Natural killer cell (primary cell): ENCODE measurements at regions of chr5 and their contacts with region 1.

Region 1: DNA sequence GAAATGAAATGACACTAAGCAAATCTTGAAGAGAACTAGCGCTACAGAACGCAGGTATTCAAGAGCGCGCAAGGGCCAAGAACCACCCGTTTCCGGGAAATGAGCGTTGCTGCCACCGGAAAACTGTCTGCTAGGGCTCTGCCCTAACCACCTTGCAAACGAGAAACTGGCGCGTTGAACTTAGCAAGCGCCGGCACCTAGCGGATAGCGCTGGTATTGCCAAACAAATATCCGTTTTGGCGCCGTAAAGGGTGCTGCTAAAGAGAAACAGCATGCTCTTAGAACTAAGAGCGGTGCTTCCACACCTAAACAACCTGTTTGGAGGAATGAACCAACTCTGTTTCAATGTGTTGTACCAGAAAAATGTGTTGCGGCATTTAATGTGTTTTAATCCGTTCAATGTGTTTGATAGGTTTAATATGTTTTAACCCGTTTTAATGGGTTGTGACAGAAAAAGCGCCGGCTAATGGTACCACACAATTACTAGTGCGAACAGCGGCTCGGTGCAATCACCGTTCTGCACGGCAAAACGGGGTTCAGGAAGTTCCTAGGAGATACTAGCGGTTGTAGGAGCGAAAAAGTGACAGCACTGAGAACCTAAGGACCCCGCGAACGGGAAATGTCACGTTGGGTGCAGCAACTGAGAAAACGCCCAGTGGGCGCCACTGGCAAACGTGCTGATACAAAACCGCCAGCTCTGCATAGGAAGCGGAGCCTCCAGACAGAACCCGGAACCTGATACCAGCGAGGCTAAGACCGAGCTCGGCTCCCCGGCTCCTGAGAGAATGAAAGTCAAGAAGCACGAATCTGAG is at the start of gene ANXA2R:
- DNase-seq: peak; percentile 83 to 98
- ATAC-seq: peak; percentile 54 to 73 (median 56)
- H3K4me3 ChIP-seq: peak within 1 kb of the TSS; percentile 74
- H3K4me3 Mint-ChIP-seq: peak within 1 kb of the TSS; percentile 93
- H3K27ac ChIP-seq: peak within 1 kb of the TSS; percentile 98
- H3K27ac Mint-ChIP-seq: peak within 1 kb of the TSS; percentile 92 to 96
- H3K4me1 ChIP-seq: peaks cover 61% of the 10 kb centered on the region
- H3K4me1 Mint-ChIP-seq: peaks cover 74 to 83% of the 10 kb centered on the region in 2 donors
- H3K27me3 ChIP-seq: no peaks in the 10 kb centered on the region
- H3K27me3 Mint-ChIP-seq: no peaks in the 10 kb centered on the region
- CTCF ChIP-seq: peak; percentile 72
- total RNA-seq, gene ANXA2R: 34.3 to 55.2 (median 38.0) TPM

Region 2: GRCh38 chr5:42908509-42909488 is 131.7 kb before region 1 on chr5:
- intact Hi-C with region 1: loop called (anchors 1 kb)
- DNase-seq: peak; percentile 83 to 98
- ATAC-seq: peak; percentile 84 to 95 (median 93)
- H3K4me3 ChIP-seq: peak overlapping the region; percentile 67
- H3K4me3 Mint-ChIP-seq: peak overlapping the region; percentile 96
- H3K27ac ChIP-seq: peak overlapping the region; percentile 41
- H3K27ac Mint-ChIP-seq: peak overlapping the region; percentile 86 to 90
- H3K4me1 ChIP-seq: peaks cover 8% of the 10 kb centered on the region
- H3K4me1 Mint-ChIP-seq: peaks cover 8 to 14% of the 10 kb centered on the region in 2 donors
- H3K27me3 ChIP-seq: no peaks in the 10 kb centered on the region
- H3K27me3 Mint-ChIP-seq: peaks cover 15 to 26% of the 10 kb centered on the region in 2 donors
- CTCF ChIP-seq: peak; percentile 81

Region 3: GRCh38 chr5:42970636-42971559 is 69.6 kb before region 1 on chr5:
- intact Hi-C with region 1: no loop called
- DNase-seq: peak in 1 of 2 donors; percentile 39
- ATAC-seq: peak in 1 of 3 donors; percentile 58
- H3K4me3 ChIP-seq: no peak overlapping the region
- H3K4me3 Mint-ChIP-seq: no peak overlapping the region
- H3K27ac ChIP-seq: no peak overlapping the region
- H3K27ac Mint-ChIP-seq: no peak overlapping the region
- H3K4me1 ChIP-seq: peaks cover 4% of the 10 kb centered on the region
- H3K4me1 Mint-ChIP-seq: peaks cover 0 to 4% of the 10 kb centered on the region in 2 donors
- H3K27me3 ChIP-seq: no peaks in the 10 kb centered on the region
- H3K27me3 Mint-ChIP-seq: no peaks in the 10 kb centered on the region
- CTCF ChIP-seq: no peak

Region 4: DNA sequence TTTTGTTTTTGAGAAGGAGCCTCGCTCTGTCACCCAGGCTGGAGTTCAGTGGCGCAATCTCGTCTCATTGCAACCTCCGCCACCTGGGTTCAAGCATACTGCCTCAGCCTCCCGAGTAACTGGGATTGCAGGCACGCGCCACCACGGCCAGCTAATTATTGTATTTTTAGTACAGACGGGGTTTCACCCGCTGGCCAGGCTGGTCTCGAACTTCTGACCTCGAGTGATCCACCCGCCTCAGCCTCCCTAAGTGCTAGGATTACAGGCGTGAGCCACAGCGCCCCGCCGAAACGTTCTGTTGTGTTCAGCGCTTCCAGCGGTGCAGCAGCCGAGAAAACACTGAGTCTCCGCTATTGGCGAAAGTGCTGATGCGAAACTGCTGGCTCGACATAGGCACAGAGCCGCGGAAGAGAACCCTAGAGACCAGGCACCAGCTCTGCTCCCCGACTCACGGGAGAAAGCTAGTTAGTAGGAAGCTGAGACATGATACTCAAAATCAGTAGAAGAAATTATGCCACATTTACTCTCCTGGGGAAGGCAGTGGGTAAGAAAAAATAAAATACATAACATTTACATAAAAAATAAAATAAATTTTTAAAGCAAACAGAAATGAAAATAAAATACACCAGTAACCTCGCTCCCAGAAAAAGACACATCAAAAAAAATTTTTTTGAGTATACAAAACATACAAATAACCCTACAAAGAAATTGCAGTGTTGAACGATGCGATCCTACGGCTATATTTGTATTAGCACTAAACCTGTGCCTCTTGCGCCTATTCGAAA is 31.9 kb before region 1 on chr5:
- intact Hi-C with region 1: loop called (anchors 1 kb)
- DNase-seq: peak; percentile 82 to 97
- ATAC-seq: peak; percentile 61 to 79 (median 65)
- H3K4me3 ChIP-seq: peak overlapping the region; percentile 81
- H3K4me3 Mint-ChIP-seq: peak overlapping the region; percentile 89
- H3K27ac ChIP-seq: peak overlapping the region; percentile 88
- H3K27ac Mint-ChIP-seq: peak overlapping the region; percentile 99 to 100
- H3K4me1 ChIP-seq: peaks cover 36% of the 10 kb centered on the region
- H3K4me1 Mint-ChIP-seq: peaks cover 27 to 49% of the 10 kb centered on the region in 2 donors
- H3K27me3 ChIP-seq: no peaks in the 10 kb centered on the region
- H3K27me3 Mint-ChIP-seq: no peaks in the 10 kb centered on the region
- CTCF ChIP-seq: no peak

Region 5: GRCh38 chr5:43066799-43067741 is 26.6 kb after region 1 on chr5:
- intact Hi-C with region 1: loop called (anchors 1 kb)
- DNase-seq: peak; percentile 87 to 95
- ATAC-seq: peak; percentile 51 to 74 (median 57)
- H3K4me3 ChIP-seq: peak overlapping the region; percentile 72
- H3K4me3 Mint-ChIP-seq: peak overlapping the region; percentile 100
- H3K27ac ChIP-seq: peak overlapping the region; percentile 96
- H3K27ac Mint-ChIP-seq: peak overlapping the region; percentile 97 to 100
- H3K4me1 ChIP-seq: peaks cover 46% of the 10 kb centered on the region
- H3K4me1 Mint-ChIP-seq: peaks cover 41 to 51% of the 10 kb centered on the region in 2 donors
- H3K27me3 ChIP-seq: no peaks in the 10 kb centered on the region
- H3K27me3 Mint-ChIP-seq: no peaks in the 10 kb centered on the region
- CTCF ChIP-seq: no peak

Region 6: GRCh38 chr5:43120720-43121564 is 80.4 kb after region 1 on chr5 and contains the start of gene ZNF131:
- intact Hi-C with region 1: loop called (anchors 1 kb)
- DNase-seq: peak; percentile 99
- ATAC-seq: peak; percentile 87 to 96 (median 89)
- H3K4me3 ChIP-seq: peak within 1 kb of the TSS; percentile 59
- H3K4me3 Mint-ChIP-seq: peak within 1 kb of the TSS; percentile 87
- H3K27ac ChIP-seq: peak within 1 kb of the TSS; percentile 88
- H3K27ac Mint-ChIP-seq: peak within 1 kb of the TSS; percentile 88 to 99
- H3K4me1 ChIP-seq: peaks cover 13% of the 10 kb centered on the region
- H3K4me1 Mint-ChIP-seq: peaks cover 26 to 29% of the 10 kb centered on the region in 2 donors
- H3K27me3 ChIP-seq: no peaks in the 10 kb centered on the region
- H3K27me3 Mint-ChIP-seq: no peaks in the 10 kb centered on the region
- CTCF ChIP-seq: no peak
- total RNA-seq, gene ZNF131: 69.0 to 84.0 (median 83.5) TPM

Region 7: GRCh38 chr5:43156388-43156787 is 115.9 kb after region 1 on chr5:
- intact Hi-C with region 1: no loop called
- DNase-seq: no peak
- ATAC-seq: peak in 2 of 3 donors; percentile 36 to 42
- H3K4me3 ChIP-seq: no peak overlapping the region
- H3K4me3 Mint-ChIP-seq: no peak overlapping the region
- H3K27ac ChIP-seq: no peak overlapping the region
- H3K27ac Mint-ChIP-seq: peak overlapping the region in 1 of 2 donors; percentile 60
- H3K4me1 ChIP-seq: no peaks in the 10 kb centered on the region
- H3K4me1 Mint-ChIP-seq: peaks cover 20 to 35% of the 10 kb centered on the region in 2 donors
- H3K27me3 ChIP-seq: no peaks in the 10 kb centered on the region
- H3K27me3 Mint-ChIP-seq: no peaks in the 10 kb centered on the region
- CTCF ChIP-seq: no peak